Activated naive CD4-positive, alpha-beta T cell treated with anti-CD3 and anti-CD28 coated beads for 36 hours (primary cell): ENCODE measurements at regions of chrX and their contacts with region 1.

Region 1: GRCh38 chrX:15973299-15973698 is 118.7 kb upstream of the AP1S2 start:
- DNase-seq: peak; percentile 39
- H3K4me3 Mint-ChIP-seq: no peak overlapping the region
- H3K27ac Mint-ChIP-seq: no peak overlapping the region
- H3K4me1 Mint-ChIP-seq: peaks cover 6% of the 10 kb centered on the region
- H3K27me3 Mint-ChIP-seq: no peaks in the 10 kb centered on the region

Region 2: GRCh38 chrX:15143050-15143824 is 830.1 kb before region 1 on chrX:
- CTCF ChIA-PET with region 1: no interaction called
- intact Hi-C with region 1: no loop called
- DNase-seq: peak; percentile 73
- H3K4me3 Mint-ChIP-seq: no peak overlapping the region
- H3K27ac Mint-ChIP-seq: no peak overlapping the region
- H3K4me1 Mint-ChIP-seq: peaks cover 15% of the 10 kb centered on the region
- H3K27me3 Mint-ChIP-seq: no peaks in the 10 kb centered on the region

Region 3: DNA sequence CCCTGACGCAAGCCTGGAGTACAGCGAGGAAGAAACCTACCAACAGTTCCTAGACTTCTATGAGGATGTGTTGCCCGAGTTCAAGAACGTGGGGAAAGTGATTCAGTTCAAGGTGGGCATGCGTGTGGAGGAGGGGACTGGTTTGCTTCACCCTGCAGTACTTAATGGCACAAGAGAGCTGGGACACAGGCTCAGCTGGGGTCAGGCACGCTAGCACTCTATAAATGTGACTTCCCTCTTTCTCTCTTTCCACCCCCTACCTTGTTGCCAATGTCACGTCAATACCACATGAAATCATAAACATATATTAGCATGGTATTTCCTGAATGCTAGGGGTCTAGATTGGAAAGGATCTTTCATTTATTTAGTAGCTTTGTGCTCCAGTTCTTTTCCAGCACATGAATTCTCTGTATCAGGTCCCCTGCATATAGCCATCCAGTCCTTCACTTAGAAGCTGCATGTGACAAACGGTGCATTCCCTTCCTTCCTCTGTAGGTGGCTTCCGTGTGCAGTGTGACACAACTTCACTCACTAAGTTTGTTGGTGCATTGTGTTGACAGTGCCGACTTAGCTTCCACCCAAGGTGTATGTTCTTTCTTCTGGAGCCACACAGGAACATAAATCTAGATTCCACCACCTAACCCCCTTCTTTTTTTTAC is 157.4 kb before region 1 on chrX:
- CTCF ChIA-PET with region 1: interaction called, 3 read pairs
- intact Hi-C with region 1: loop called (anchors 2 kb)
- DNase-seq: peak; percentile 49
- H3K4me3 Mint-ChIP-seq: no peak overlapping the region
- H3K27ac Mint-ChIP-seq: peak overlapping the region; percentile 78
- H3K4me1 Mint-ChIP-seq: peaks cover 40% of the 10 kb centered on the region
- H3K27me3 Mint-ChIP-seq: no peaks in the 10 kb centered on the region